T-cell (primary cell): ENCODE measurements at regions of chr9 and their contacts with region 1.

Region 1: GRCh38 chr9:120892748-120893610 is 16.0 kb upstream of the PHF19 start:
- DNase-seq: peak in 25 of 35 experiments; percentile 37 to 79 (median 51)
- ATAC-seq: peak; percentile 50 to 62 (median 58)
- H3K4me3 ChIP-seq: no peak overlapping the region
- H3K4me3 Mint-ChIP-seq: peak overlapping the region in 2 of 3 donors; percentile 64 to 69
- H3K27ac ChIP-seq: peak overlapping the region; percentile 96
- H3K27ac Mint-ChIP-seq: peak overlapping the region; percentile 98
- H3K4me1 ChIP-seq: peaks cover 50 to 93% of the 10 kb centered on the region in 2 experiments
- H3K4me1 Mint-ChIP-seq: peaks cover 64 to 90% (median 85%) of the 10 kb centered on the region in 3 donors
- H3K27me3 ChIP-seq: no peaks in the 10 kb centered on the region
- H3K27me3 Mint-ChIP-seq: no peaks in the 10 kb centered on the region

Region 2: DNA sequence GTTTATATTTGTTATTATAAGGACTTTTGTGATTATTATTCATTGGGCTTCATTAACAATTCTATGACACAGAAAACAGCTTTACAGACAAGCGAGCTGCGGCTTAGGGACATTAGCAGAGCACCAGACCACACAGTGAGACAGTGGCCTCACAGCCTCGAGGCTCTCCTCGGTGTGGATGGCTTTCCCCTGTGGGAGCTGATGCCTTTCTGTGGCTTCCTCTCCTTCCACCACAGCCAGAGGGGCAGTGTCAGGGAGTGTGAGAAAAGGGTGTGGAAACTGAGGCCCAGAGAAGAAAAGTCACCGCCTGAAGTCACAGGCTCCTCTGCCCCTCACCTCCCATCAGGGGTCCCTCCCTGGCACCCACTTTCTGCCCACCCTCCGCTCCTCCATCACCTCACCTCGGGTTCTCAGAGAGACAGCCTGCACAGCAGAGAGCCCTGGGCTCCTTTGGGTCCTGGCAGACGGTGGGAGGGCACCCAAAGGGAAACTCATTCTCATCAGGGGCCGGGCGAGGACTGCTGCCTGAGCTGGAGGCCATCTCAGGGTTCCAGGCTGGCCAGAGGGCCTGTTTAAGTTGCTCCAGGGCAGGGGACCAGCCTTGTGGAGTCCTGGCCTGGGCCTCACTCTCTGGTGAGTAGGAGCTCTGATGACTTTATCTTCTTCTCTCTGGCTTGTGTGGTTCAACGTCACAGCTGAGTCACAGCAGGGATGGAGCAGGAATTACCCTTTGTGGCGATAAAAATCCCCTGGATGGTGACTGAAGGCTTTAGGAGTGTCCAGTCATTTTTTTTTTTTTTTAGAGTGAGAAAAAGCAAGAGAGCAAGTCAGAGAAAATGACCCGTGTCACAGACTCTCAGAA is 32.8 kb after region 1 on chr9:
- CTCF ChIA-PET with region 1: interaction called, 3 to 26 read pairs
- POLR2A ChIA-PET with region 1: interaction called, 4 to 5 read pairs
- DNase-seq: peak in 32 of 35 experiments; percentile 40 to 88 (median 62)
- ATAC-seq: peak; percentile 20 to 64 (median 26)
- H3K4me3 ChIP-seq: peak overlapping the region; percentile 53 to 81
- H3K4me3 Mint-ChIP-seq: peak overlapping the region; percentile 94 to 96 (median 95)
- H3K27ac ChIP-seq: peak overlapping the region; percentile 99
- H3K27ac Mint-ChIP-seq: peak overlapping the region; percentile 98 to 99
- H3K4me1 ChIP-seq: peaks cover 31 to 94% of the 10 kb centered on the region in 2 experiments
- H3K4me1 Mint-ChIP-seq: peaks cover 89 to 91% (median 91%) of the 10 kb centered on the region in 3 donors
- H3K27me3 ChIP-seq: no peaks in the 10 kb centered on the region
- H3K27me3 Mint-ChIP-seq: no peaks in the 10 kb centered on the region